ENCODE measurements at regions of chr4 and their contacts with region 1.

Region 1: GRCh38 chr4:25376754-25377571 is at the start of gene ANAPC4:
- DNase-seq: peak; percentile 98
- H3K4me3 ChIP-seq: peak within 1 kb of the TSS; percentile 67 to 94 (median 74)
- H3K27ac ChIP-seq: peak within 1 kb of the TSS; percentile 77 to 83 (median 80)
- H3K4me1 ChIP-seq: peaks cover 0 to 22% (median 19%) of the 10 kb centered on the region in 4 donors
- H3K27me3 ChIP-seq: no peaks in the 10 kb centered on the region
- CTCF ChIP-seq: peak in 2 of 4 experiments; percentile 13 to 14
- EP300 ChIP-seq: peak in 1 of 4 donors; percentile 6
- POLR2A ChIP-seq: peak in 1 of 2 donors; percentile 57
- total RNA-seq, gene ANAPC4: 31.4 to 75.1 (median 34.5) TPM

Region 2: DNA sequence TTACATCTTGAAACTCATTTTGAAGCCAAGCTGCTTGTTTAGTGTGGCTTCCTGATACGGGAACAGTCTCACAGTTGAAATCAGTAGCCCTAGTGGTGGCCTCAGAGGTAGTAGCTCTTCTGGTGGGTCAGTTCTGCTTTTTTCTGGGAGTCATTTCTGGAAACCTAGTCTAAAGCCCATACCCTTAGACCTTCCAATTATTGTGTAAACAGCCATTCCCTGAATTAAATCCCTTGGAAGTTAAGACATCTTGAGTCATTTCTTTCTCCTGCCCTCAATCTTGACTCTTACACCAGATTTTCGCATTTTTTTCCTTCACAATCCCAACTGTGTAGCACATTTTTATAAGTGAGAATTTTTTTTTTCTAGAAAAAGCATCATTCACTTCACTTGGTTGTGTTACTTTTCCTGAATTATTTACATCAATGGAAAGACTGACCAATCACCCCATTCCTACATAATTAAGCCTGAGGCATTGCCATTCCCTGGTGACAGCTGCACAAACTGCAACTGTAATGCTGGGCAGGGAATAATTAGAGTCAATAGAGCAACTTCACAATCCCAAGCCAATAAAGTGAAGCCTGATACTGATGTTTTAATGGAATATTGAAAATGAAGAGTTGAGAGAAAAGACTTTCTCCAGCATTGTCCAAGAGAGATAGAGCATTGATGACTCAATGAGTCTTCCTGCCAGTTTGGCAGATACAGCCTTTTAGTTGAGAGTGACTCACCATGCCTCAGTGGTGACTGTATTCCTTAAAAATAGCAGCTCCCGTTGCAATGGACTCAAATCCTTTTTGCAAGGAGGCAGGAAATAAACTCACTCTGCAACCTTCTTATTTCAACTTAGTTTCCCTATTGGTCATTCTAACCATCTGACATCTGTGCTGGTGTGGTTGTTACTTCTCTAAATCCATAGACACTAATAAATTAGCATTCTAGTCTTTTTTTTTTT is 203.7 kb before region 1 on chr4:
- intact Hi-C with region 1: loop called (anchors 5 kb)
- DNase-seq: peak; percentile 70
- H3K4me3 ChIP-seq: no peak overlapping the region
- H3K27ac ChIP-seq: peak overlapping the region; percentile 33 to 79 (median 61)
- H3K4me1 ChIP-seq: peaks cover 0 to 20% (median 14%) of the 10 kb centered on the region in 4 donors
- H3K27me3 ChIP-seq: no peaks in the 10 kb centered on the region
- CTCF ChIP-seq: no peak
- EP300 ChIP-seq: no peak
- POLR2A ChIP-seq: no peak

Region 3: GRCh38 chr4:25312496-25313200 is 64.3 kb before region 1 on chr4 and contains the start of gene ZCCHC4:
- intact Hi-C with region 1: loop called (anchors 2 kb)
- DNase-seq: peak; percentile 93
- H3K4me3 ChIP-seq: peak within 1 kb of the TSS; percentile 47 to 76 (median 70)
- H3K27ac ChIP-seq: peak within 1 kb of the TSS; percentile 62 to 83 (median 80)
- H3K4me1 ChIP-seq: peaks cover 0 to 9% (median 8%) of the 10 kb centered on the region in 4 donors
- H3K27me3 ChIP-seq: no peaks in the 10 kb centered on the region
- CTCF ChIP-seq: peak; percentile 53 to 99 (median 84)
- EP300 ChIP-seq: no peak
- POLR2A ChIP-seq: no peak
- total RNA-seq, gene ZCCHC4: 9.1 to 21.8 (median 17.8) TPM

Region 4: GRCh38 chr4:25580633-25581467 is 203.9 kb after region 1 on chr4:
- intact Hi-C with region 1: no loop called
- DNase-seq: no peak
- H3K4me3 ChIP-seq: no peak overlapping the region
- H3K27ac ChIP-seq: no peak overlapping the region
- H3K4me1 ChIP-seq: no peaks in the 10 kb centered on the region
- H3K27me3 ChIP-seq: no peaks in the 10 kb centered on the region
- CTCF ChIP-seq: no peak
- EP300 ChIP-seq: no peak
- POLR2A ChIP-seq: no peak

Region 5: GRCh38 chr4:26061248-26061986 is 684.5 kb after region 1 on chr4:
- intact Hi-C with region 1: no loop called
- DNase-seq: no peak
- H3K4me3 ChIP-seq: no peak overlapping the region
- H3K27ac ChIP-seq: no peak overlapping the region
- H3K4me1 ChIP-seq: peaks cover 0 to 10% (median 5%) of the 10 kb centered on the region in 4 donors
- H3K27me3 ChIP-seq: no peaks in the 10 kb centered on the region
- CTCF ChIP-seq: no peak
- EP300 ChIP-seq: no peak
- POLR2A ChIP-seq: no peak

Measured in sigmoid colon (tissue), 7 donors.